ENCODE measurements at regions of chr6 and their contacts with region 1.

Region 1: GRCh38 chr6:96521644-96522464 is at the start of gene UFL1:
- DNase-seq: peak; percentile 91 to 96 (median 94)
- H3K4me3 ChIP-seq: peak within 1 kb of the TSS; percentile 77 to 79
- H3K4me3 Mint-ChIP-seq: peak within 1 kb of the TSS; percentile 96 to 100 (median 100)
- H3K27ac ChIP-seq: peak within 1 kb of the TSS; percentile 97
- H3K27ac Mint-ChIP-seq: peak within 1 kb of the TSS; percentile 99 to 100 (median 100)
- H3K4me1 ChIP-seq: peaks cover 36% of the 10 kb centered on the region
- H3K4me1 Mint-ChIP-seq: peaks cover 16 to 41% (median 23%) of the 10 kb centered on the region in 4 donors
- H3K27me3 ChIP-seq: no peaks in the 10 kb centered on the region
- H3K27me3 Mint-ChIP-seq: no peaks in the 10 kb centered on the region
- total RNA-seq, gene UFL1: 35.0 to 38.5 TPM

Region 2: GRCh38 chr6:95577304-95578105 is 944.3 kb before region 1 on chr6 and contains the start of gene MANEA:
- CTCF ChIA-PET with region 1: no interaction called
- POLR2A ChIA-PET with region 1: interaction called, 7 read pairs
- intact Hi-C with region 1: loop called (anchors 1 kb)
- DNase-seq: peak; percentile 81 to 87 (median 82)
- H3K4me3 ChIP-seq: peak within 1 kb of the TSS; percentile 90 to 98
- H3K4me3 Mint-ChIP-seq: peak within 1 kb of the TSS; percentile 94 to 98 (median 97)
- H3K27ac ChIP-seq: peak within 1 kb of the TSS; percentile 86
- H3K27ac Mint-ChIP-seq: peak within 1 kb of the TSS; percentile 94 to 99 (median 97)
- H3K4me1 ChIP-seq: peaks cover 54% of the 10 kb centered on the region
- H3K4me1 Mint-ChIP-seq: peaks cover 32 to 70% (median 46%) of the 10 kb centered on the region in 4 donors
- H3K27me3 ChIP-seq: no peaks in the 10 kb centered on the region
- H3K27me3 Mint-ChIP-seq: no peaks in the 10 kb centered on the region
- total RNA-seq, gene MANEA: 12.2 to 13.0 TPM

Region 3: DNA sequence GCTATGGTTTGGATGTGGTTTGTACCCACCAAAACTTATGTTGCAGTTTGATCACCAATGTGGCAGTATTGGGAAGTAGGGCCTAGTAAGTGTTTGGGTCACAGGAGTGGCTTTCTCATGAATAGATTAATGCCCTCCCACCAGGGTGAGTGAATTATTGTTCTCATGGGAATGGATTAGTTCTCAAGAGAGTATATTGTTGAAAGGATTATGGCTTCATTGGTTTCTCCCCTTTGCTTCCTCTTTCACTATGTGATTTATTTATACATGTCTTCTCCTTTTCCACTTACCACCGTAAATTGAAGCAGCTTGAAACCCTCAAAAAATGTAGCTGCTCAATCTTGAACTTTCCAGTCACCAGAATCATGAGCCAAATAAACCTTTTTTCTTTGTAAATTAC is 10.5 kb after region 1 on chr6:
- CTCF ChIA-PET with region 1: interaction called, 4 read pairs
- POLR2A ChIA-PET with region 1: interaction called, 12 read pairs
- intact Hi-C with region 1: no loop called
- DNase-seq: no peak
- H3K4me3 ChIP-seq: no peak overlapping the region
- H3K4me3 Mint-ChIP-seq: no peak overlapping the region
- H3K27ac ChIP-seq: no peak overlapping the region
- H3K27ac Mint-ChIP-seq: peak overlapping the region in 1 of 7 donors; percentile 27
- H3K4me1 ChIP-seq: peaks cover 5% of the 10 kb centered on the region
- H3K4me1 Mint-ChIP-seq: peaks cover 12 to 37% (median 29%) of the 10 kb centered on the region in 4 donors
- H3K27me3 ChIP-seq: no peaks in the 10 kb centered on the region
- H3K27me3 Mint-ChIP-seq: no peaks in the 10 kb centered on the region

Region 4: DNA sequence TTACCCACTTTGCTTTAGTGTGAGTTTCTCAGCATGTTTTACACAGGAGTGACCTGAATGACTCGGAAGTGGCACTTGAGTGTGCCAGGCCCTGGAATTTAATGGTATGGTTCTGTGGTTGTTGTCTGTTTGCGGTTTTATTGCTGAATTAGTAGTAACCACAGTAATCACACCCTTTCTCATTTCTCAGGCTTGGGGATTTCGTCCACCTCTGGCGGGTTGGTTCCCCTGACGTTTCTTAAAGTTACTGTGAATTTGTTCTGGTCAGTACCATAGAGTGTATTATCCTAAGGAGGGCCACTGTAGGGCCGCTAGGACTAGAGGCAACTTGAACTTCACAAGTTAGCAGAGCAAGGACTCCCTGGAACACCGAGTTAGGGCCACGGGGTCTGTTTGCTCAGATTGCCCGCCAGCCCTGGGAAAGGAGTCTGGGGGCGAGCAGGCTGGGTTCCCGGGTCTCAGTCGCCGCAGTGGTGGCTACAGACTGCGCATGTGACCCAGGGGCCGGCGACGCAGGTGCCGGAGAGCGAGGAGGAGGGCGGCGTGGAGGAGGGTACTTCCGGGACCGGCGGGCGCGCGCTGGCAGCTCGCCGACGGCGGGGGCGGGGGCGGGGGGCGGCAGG is 402.1 kb after region 1 on chr6:
- CTCF ChIA-PET with region 1: no interaction called
- POLR2A ChIA-PET with region 1: interaction called, 15 read pairs
- intact Hi-C with region 1: loop called (anchors 1 kb)
- DNase-seq: peak in 1 of 5 donors; percentile 66
- H3K4me3 ChIP-seq: peak overlapping the region; percentile 45 to 75
- H3K4me3 Mint-ChIP-seq: peak overlapping the region; percentile 89 to 98 (median 96)
- H3K27ac ChIP-seq: peak overlapping the region; percentile 91
- H3K27ac Mint-ChIP-seq: peak overlapping the region; percentile 97 to 100 (median 98)
- H3K4me1 ChIP-seq: peaks cover 30% of the 10 kb centered on the region
- H3K4me1 Mint-ChIP-seq: peaks cover 21 to 49% (median 34%) of the 10 kb centered on the region in 4 donors
- H3K27me3 ChIP-seq: no peaks in the 10 kb centered on the region
- H3K27me3 Mint-ChIP-seq: peaks cover 0 to 2% of the 10 kb centered on the region in 2 donors

Region 5: DNA sequence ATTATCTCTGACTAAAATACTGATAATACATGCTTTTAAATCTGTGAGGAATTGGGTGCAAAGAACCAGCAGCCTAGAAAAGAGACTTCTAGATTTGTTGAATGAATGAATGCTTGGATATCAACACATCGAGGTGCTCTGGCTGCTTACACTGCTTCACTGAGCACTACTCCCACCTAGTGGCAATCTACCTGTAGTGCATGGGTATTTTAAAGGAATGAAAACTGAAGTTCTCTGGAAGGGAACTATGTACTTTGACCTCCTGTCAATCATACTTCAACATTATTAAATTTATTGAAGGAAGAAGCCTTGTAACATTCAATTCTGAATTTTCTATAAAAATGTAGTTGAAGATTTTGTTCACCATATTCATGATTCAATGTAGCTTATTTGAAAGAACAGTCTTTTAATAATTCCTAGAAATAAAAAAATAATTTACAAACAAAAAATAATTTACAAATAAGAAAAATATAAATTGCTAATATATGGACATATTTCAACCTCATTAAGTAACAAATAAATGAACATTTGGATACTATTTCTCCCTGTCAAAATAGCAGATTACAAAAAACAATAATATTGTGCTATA is 872.4 kb after region 1 on chr6:
- CTCF ChIA-PET with region 1: no interaction called
- POLR2A ChIA-PET with region 1: no interaction called
- intact Hi-C with region 1: loop called (anchors 10 kb)
- DNase-seq: peak; percentile 40 to 58 (median 51)
- H3K4me3 ChIP-seq: no peak overlapping the region
- H3K4me3 Mint-ChIP-seq: no peak overlapping the region
- H3K27ac ChIP-seq: no peak overlapping the region
- H3K27ac Mint-ChIP-seq: no peak overlapping the region
- H3K4me1 ChIP-seq: no peaks in the 10 kb centered on the region
- H3K4me1 Mint-ChIP-seq: no peaks in the 10 kb centered on the region
- H3K27me3 ChIP-seq: no peaks in the 10 kb centered on the region
- H3K27me3 Mint-ChIP-seq: peaks cover 6 to 8% of the 10 kb centered on the region in 2 donors